HEK293 (cell line): ENCODE measurements at regions of chr7 and their contacts with region 1.

Region 1: GRCh38 chr7:27936047-27936767 is 196.2 kb downstream of the TAX1BP1 start:
- H3K4me3 ChIP-seq: no peak overlapping the region
- H3K27ac ChIP-seq: no peak overlapping the region
- H3K4me1 ChIP-seq: peaks cover 10% of the 10 kb centered on the region; the same call in 1 of the 2 replicates
- CTCF ChIP-seq: no peak

Region 2: GRCh38 chr7:27890205-27890849 is 45.9 kb before region 1 on chr7:
- CTCF ChIA-PET with region 1: no interaction called
- POLR2A ChIA-PET with region 1: no interaction called
- H3K4me3 ChIP-seq: no peak overlapping the region
- H3K27ac ChIP-seq: no peak overlapping the region
- H3K4me1 ChIP-seq: no peaks in the 10 kb centered on the region
- CTCF ChIP-seq: no peak

Region 3: GRCh38 chr7:27901028-27901760 is 35.0 kb before region 1 on chr7:
- CTCF ChIA-PET with region 1: no interaction called
- POLR2A ChIA-PET with region 1: no interaction called
- H3K4me3 ChIP-seq: no peak overlapping the region
- H3K27ac ChIP-seq: no peak overlapping the region
- H3K4me1 ChIP-seq: 0 out of 2 replicates have a peak, but pooled peaks cover 4% of the 10 kb centered on the region
- CTCF ChIP-seq: no peak

Region 4: GRCh38 chr7:28020302-28020940 is 84.2 kb after region 1 on chr7:
- CTCF ChIA-PET with region 1: interaction called, 14 read pairs
- POLR2A ChIA-PET with region 1: no interaction called
- H3K4me3 ChIP-seq: no peak overlapping the region
- H3K27ac ChIP-seq: no peak overlapping the region
- H3K4me1 ChIP-seq: peaks cover 5% of the 10 kb centered on the region; the same call in 1 of the 2 replicates
- CTCF ChIP-seq: peak; percentile 91